GM23248 (cell line): ENCODE measurements at regions of chr2 and their contacts with region 1.

Region 1: GRCh38 chr2:46082521-46083485 is 214.4 kb upstream of the EPAS1 start:
- DNase-seq: peak; percentile 90
- H3K4me3 ChIP-seq: no peak overlapping the region
- H3K27ac ChIP-seq: peak overlapping the region; percentile 67
- H3K4me1 ChIP-seq: peaks cover 14% of the 10 kb centered on the region; the same call in 1 of the 2 replicates
- H3K27me3 ChIP-seq: no peaks in the 10 kb centered on the region

Region 2: GRCh38 chr2:45370362-45370761 is 712.4 kb before region 1 on chr2:
- in situ Hi-C with region 1: no loop called
- DNase-seq: peak; percentile 39
- H3K4me3 ChIP-seq: no peak overlapping the region
- H3K27ac ChIP-seq: no peak overlapping the region
- H3K4me1 ChIP-seq: no peaks in the 10 kb centered on the region
- H3K27me3 ChIP-seq: no peaks in the 10 kb centered on the region

Region 3: DNA sequence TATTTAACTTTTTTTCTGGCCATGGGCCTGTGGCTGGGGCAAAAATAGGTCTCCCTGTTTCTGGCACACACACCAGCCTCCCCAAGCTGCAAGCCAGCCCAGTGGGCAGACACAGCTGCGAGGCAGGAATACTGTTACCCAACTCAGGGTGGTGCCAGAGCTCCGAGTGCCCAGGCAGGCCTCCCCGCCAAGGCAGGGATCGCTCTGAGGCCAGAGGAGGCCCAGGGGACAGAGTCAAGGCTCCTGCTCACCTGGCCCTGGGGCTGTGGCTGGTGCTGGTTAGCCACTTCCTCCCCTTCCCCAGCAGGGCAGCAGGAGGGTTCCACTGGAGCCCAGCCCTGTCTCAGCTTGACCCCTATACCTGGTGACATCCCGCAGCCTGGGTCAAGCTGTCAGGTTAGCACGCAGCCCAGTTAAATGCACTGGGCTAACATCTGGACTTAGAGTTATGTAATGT is 147.3 kb after region 1 on chr2:
- in situ Hi-C with region 1: no loop called
- DNase-seq: no peak
- H3K4me3 ChIP-seq: no peak overlapping the region
- H3K27ac ChIP-seq: no peak overlapping the region
- H3K4me1 ChIP-seq: peaks cover 14% of the 10 kb centered on the region
- H3K27me3 ChIP-seq: no peaks in the 10 kb centered on the region

Region 4: GRCh38 chr2:46296840-46297545 is 214.2 kb after region 1 on chr2 and contains the start of gene EPAS1:
- in situ Hi-C with region 1: loop called (anchors 10 kb)
- DNase-seq: peak; percentile 94
- H3K4me3 ChIP-seq: peak within 1 kb of the TSS; percentile 97
- H3K27ac ChIP-seq: peak within 1 kb of the TSS; percentile 79
- H3K4me1 ChIP-seq: peaks cover 8% of the 10 kb centered on the region; the same call in 1 of the 2 replicates
- H3K27me3 ChIP-seq: no peaks in the 10 kb centered on the region
- total RNA-seq, gene EPAS1: 66.3 and 73.8 TPM in 2 replicates